CD8-positive, alpha-beta T cell (primary cell): ENCODE measurements at regions of chr16 and their contacts with region 1.

Region 1: GRCh38 chr16:57300387-57301125 is 16.1 kb upstream of the PLLP start:
- DNase-seq: peak; percentile 98 to 100 (median 99)
- ATAC-seq: peak; percentile 91
- H3K4me3 ChIP-seq: peak overlapping the region; percentile 57 to 65
- H3K4me3 Mint-ChIP-seq: no peak overlapping the region
- H3K27ac ChIP-seq: peak overlapping the region; percentile 60 to 81
- H3K27ac Mint-ChIP-seq: no peak overlapping the region
- H3K4me1 ChIP-seq: peaks cover 17% of the 10 kb centered on the region
- H3K4me1 Mint-ChIP-seq: peaks cover 25% of the 10 kb centered on the region
- H3K27me3 ChIP-seq: no peaks in the 10 kb centered on the region
- H3K27me3 Mint-ChIP-seq: no peaks in the 10 kb centered on the region
- CTCF ChIP-seq: peak; percentile 82

Region 2: GRCh38 chr16:57091975-57092785 is 208.4 kb before region 1 on chr16 and contains the start of gene CPNE2:
- CTCF ChIA-PET with region 1: no interaction called
- POLR2A ChIA-PET with region 1: no interaction called
- intact Hi-C with region 1: loop called (anchors 10 kb)
- DNase-seq: peak in 2 of 9 experiments; percentile 20 to 50
- ATAC-seq: peak; percentile 57
- H3K4me3 ChIP-seq: peak within 1 kb of the TSS; percentile 31 to 49
- H3K4me3 Mint-ChIP-seq: peak within 1 kb of the TSS; percentile 79
- H3K27ac ChIP-seq: no peak within 1 kb of the TSS
- H3K27ac Mint-ChIP-seq: peak within 1 kb of the TSS; percentile 13
- H3K4me1 ChIP-seq: peaks cover 14% of the 10 kb centered on the region
- H3K4me1 Mint-ChIP-seq: peaks cover 14% of the 10 kb centered on the region
- H3K27me3 ChIP-seq: peaks cover 0 to 5% of the 10 kb centered on the region in 2 experiments
- H3K27me3 Mint-ChIP-seq: no peaks in the 10 kb centered on the region
- CTCF ChIP-seq: no peak
- total RNA-seq, gene CPNE2: 5.7 to 6.8 TPM

Region 3: DNA sequence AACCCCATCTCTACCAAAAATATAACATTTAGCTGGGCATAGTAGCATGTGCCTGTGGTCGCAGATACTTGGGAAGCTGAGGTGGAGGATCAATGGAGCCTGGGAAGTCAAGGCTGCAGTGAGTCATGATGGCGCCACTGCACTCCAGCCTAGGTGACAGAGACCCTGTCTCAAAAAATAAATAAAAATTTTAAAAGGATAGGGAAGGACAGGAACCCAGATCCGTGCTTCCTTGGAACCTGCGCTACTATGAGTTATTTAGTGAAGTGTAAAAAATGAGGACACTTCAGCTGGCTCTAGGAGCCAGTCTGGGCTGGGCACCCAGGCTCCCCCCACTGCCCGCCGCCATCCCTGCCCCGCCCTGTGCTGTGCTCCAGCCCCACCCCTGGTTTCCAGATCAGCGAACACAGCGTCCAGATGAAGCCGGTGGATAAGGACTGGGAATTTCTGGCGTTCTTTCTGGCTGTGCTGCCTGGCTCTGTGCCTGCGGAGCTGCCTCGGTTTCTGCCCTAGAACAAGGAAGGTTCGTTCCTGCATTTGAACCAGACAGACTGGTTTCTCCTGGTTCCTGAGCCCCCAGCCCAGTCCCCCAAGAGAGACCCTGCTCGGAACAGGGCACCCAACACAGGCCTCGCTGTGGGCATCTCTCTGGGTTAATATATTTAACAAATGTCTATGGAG is 34.6 kb before region 1 on chr16:
- CTCF ChIA-PET with region 1: interaction called, 4 read pairs
- POLR2A ChIA-PET with region 1: interaction called, 3 read pairs
- intact Hi-C with region 1: loop called (anchors 1 kb)
- DNase-seq: no peak
- ATAC-seq: no peak
- H3K4me3 ChIP-seq: peak overlapping the region in 1 of 2 experiments; percentile 10
- H3K4me3 Mint-ChIP-seq: peak overlapping the region; percentile 27
- H3K27ac ChIP-seq: peak overlapping the region; percentile 36 to 68
- H3K27ac Mint-ChIP-seq: peak overlapping the region; percentile 91
- H3K4me1 ChIP-seq: peaks cover 53% of the 10 kb centered on the region
- H3K4me1 Mint-ChIP-seq: peaks cover 42% of the 10 kb centered on the region
- H3K27me3 ChIP-seq: no peaks in the 10 kb centered on the region
- H3K27me3 Mint-ChIP-seq: no peaks in the 10 kb centered on the region
- CTCF ChIP-seq: no peak

Region 4: GRCh38 chr16:57422026-57422944 is 121.7 kb after region 1 on chr16:
- CTCF ChIA-PET with region 1: interaction called, 147 read pairs
- POLR2A ChIA-PET with region 1: interaction called, 19 read pairs
- intact Hi-C with region 1: loop called (anchors 1 kb)
- DNase-seq: no peak
- ATAC-seq: no peak
- H3K4me3 ChIP-seq: no peak overlapping the region
- H3K4me3 Mint-ChIP-seq: no peak overlapping the region
- H3K27ac ChIP-seq: no peak overlapping the region
- H3K27ac Mint-ChIP-seq: no peak overlapping the region
- H3K4me1 ChIP-seq: peaks cover 18% of the 10 kb centered on the region
- H3K4me1 Mint-ChIP-seq: peaks cover 19% of the 10 kb centered on the region
- H3K27me3 ChIP-seq: no peaks in the 10 kb centered on the region
- H3K27me3 Mint-ChIP-seq: no peaks in the 10 kb centered on the region
- CTCF ChIP-seq: no peak

Region 5: GRCh38 chr16:57519796-57520360 is 219.3 kb after region 1 on chr16:
- CTCF ChIA-PET with region 1: interaction called, 26 read pairs
- POLR2A ChIA-PET with region 1: interaction called, 14 read pairs
- intact Hi-C with region 1: loop called (anchors 1 kb)
- DNase-seq: peak; percentile 58 to 90 (median 83)
- ATAC-seq: peak; percentile 99
- H3K4me3 ChIP-seq: no peak overlapping the region
- H3K4me3 Mint-ChIP-seq: no peak overlapping the region
- H3K27ac ChIP-seq: no peak overlapping the region
- H3K27ac Mint-ChIP-seq: no peak overlapping the region
- H3K4me1 ChIP-seq: no peaks in the 10 kb centered on the region
- H3K4me1 Mint-ChIP-seq: peaks cover 6% of the 10 kb centered on the region
- H3K27me3 ChIP-seq: no peaks in the 10 kb centered on the region
- H3K27me3 Mint-ChIP-seq: no peaks in the 10 kb centered on the region
- CTCF ChIP-seq: peak; percentile 94

Region 6: DNA sequence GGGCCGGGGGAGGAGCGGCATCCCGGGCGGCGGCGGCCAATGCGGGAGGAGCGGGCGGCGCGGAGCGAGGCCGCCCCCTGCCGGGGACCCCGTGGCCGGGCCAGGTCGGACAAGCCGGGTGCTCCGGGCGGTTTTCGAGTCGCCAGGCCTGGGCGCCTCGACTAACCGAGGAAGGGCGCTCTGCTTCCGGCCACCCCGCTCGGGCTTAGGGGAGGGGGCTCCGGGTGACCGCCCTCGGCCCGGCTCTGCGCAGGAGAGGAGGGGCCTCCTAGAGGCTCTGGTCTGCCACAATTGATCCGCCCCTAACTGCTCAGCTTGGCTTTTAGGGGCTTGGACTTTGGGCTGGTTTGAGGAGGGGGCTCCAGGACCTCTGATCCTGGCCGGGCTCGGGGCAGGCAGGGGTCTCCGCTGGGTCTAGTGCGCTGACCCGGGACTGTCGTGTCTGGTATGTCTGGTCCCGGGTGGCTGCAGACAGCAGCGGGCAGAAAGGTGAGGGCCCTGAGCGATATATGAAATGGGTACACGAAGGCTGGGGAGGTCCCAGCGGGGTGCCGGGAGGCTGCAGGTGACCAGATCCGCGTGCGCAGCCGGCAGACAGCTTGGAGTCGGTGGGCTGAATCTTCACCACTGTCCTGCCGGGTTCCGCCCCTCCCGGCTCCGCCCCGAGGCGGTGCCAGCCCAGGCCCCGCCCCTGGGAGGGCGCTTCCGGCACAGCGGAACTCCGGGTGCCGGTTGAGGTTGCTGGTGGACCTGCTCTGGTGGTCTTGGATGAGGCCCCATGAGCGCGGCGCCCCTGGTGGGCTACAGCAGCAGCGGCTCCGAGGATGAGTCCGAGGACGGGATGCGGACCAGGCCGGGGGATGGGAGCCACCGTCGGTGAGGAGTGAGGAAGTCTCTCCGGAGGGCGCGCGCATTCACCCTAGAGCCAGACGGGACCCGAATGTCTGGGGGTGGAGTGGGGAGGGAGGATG is 700.4 kb after region 1 on chr16 and contains the start of gene USB1:
- CTCF ChIA-PET with region 1: no interaction called
- POLR2A ChIA-PET with region 1: no interaction called
- intact Hi-C with region 1: loop called in 1 of 2 experiments (anchors 2 kb)
- DNase-seq: peak; percentile 68 to 92 (median 84)
- ATAC-seq: peak; percentile 77
- H3K4me3 ChIP-seq: peak within 1 kb of the TSS; percentile 69 to 82
- H3K4me3 Mint-ChIP-seq: peak within 1 kb of the TSS; percentile 91
- H3K27ac ChIP-seq: peak within 1 kb of the TSS; percentile 61 to 71
- H3K27ac Mint-ChIP-seq: peak within 1 kb of the TSS; percentile 87
- H3K4me1 ChIP-seq: peaks cover 43% of the 10 kb centered on the region
- H3K4me1 Mint-ChIP-seq: peaks cover 64% of the 10 kb centered on the region
- H3K27me3 ChIP-seq: no peaks in the 10 kb centered on the region
- H3K27me3 Mint-ChIP-seq: no peaks in the 10 kb centered on the region
- CTCF ChIP-seq: peak; percentile 77
- total RNA-seq, gene USB1: 24.7 to 27.9 TPM